MCF 10A (cell line): ENCODE measurements at regions of chr1 and their contacts with region 1.

Region 1: GRCh38 chr1:241531195-241532161 is 700 bp upstream of the KMO start:
- DNase-seq: peak; percentile 91
- H3K4me3 Mint-ChIP-seq: peak overlapping the region; percentile 74
- H3K27ac Mint-ChIP-seq: peak overlapping the region; percentile 80
- H3K4me1 Mint-ChIP-seq: peaks cover 21% of the 10 kb centered on the region
- H3K27me3 Mint-ChIP-seq: no peaks in the 10 kb centered on the region
- CTCF ChIP-seq: peak; percentile 77

Region 2: DNA sequence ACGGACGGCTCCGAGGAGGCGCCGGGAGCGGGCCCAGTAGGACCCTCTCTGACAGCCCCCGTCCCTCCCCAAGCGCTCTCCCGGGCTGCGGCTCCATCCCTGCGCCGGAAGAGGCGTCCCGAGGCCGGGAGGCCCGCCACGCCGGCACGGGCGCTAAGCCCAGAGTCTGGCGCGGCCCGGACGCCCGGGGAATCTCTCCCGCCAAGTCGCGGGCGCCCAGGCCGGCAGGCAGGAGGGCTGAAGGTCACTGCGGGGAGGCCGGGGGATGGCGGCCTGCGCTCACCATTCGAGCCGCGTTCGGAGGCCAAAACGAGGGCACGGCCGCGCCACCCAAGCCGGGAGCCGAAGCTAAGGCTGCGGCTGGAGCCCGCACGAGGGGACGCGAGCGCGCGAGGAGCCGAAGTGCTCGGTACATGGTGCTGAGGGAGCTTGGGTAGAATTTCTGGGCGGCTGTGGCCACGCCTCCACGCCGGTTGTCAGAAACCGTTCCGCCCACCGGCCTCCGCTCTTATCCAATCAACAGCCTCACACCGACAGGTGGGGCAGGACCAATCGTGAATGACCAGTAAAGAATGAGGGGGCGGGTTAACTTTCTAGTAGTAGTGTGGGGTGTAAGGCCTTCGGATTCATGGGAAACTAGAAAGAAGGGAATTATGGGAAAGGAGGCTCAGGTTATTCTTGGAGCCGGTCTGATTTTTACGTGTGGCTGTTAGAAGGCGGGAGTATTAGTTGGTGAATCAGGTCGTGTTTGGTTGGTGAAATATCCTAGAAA is 12.0 kb before region 1 on chr1 and contains the start of gene FH:
- CTCF ChIA-PET with region 1: interaction called, 4 read pairs
- POLR2A ChIA-PET with region 1: interaction called, 26 read pairs
- intact Hi-C with region 1: no loop called
- DNase-seq: peak; percentile 100
- H3K4me3 Mint-ChIP-seq: no peak within 1 kb of the TSS
- H3K27ac Mint-ChIP-seq: peak within 1 kb of the TSS; percentile 67
- H3K4me1 Mint-ChIP-seq: peaks cover 19% of the 10 kb centered on the region
- H3K27me3 Mint-ChIP-seq: peaks cover 13% of the 10 kb centered on the region
- CTCF ChIP-seq: no peak
- total RNA-seq, gene FH: 136 and 215 TPM in 2 replicates

Region 3: DNA sequence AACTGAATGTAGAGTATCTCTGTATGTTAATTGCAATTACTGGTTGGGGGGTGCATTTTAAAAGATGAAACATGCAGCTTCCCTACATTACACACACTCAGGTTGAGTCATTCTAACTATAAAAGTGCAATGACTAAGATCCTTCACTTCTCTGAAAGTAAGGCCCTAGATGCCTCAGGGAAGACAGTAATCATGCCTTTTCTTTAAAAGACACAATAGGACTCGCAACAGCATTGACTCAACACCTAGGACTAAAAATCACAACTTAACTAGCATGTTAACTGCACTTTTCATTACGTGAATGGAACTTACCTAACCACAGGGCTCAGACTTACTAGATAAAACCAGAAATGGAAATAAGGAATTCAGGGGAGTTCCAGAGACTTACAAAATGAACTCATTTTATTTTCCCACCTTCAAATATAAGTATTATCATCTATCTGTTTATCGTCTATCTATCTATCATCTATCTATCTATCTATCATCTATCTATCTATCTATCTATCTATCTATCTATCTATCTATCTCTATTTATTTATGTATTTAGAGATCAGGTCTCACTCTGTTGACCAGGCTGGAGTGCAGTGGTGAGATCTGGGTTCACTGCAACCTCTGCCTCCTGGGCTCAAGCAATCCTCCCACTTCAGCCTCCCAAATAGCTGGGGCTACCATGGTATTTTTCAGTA is 60.9 kb after region 1 on chr1:
- CTCF ChIA-PET with region 1: interaction called, 14 read pairs
- POLR2A ChIA-PET with region 1: interaction called, 6 read pairs
- intact Hi-C with region 1: loop called (anchors 1 kb)
- DNase-seq: peak; percentile 98
- H3K4me3 Mint-ChIP-seq: peak overlapping the region; percentile 7
- H3K27ac Mint-ChIP-seq: peak overlapping the region; percentile 76
- H3K4me1 Mint-ChIP-seq: peaks cover 39% of the 10 kb centered on the region
- H3K27me3 Mint-ChIP-seq: no peaks in the 10 kb centered on the region
- CTCF ChIP-seq: no peak

Region 4: DNA sequence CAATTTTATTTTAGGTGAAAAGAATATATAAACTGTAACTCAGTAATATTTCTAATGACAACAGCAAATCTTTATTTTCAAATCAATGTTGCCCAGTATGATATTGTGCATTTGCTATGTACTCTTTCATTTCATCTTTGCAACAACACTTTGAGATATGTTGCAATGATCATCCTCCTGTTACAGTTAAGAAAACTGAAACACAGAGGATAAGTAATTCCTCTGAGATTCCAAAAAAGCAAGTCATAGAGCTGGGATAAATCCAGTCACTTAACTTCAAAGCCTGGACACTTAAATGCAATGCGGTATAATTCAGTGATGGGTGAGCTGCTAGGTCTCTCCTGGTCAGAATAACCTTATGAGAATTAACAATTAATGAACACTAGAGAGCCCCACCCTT is 267.9 kb after region 1 on chr1:
- CTCF ChIA-PET with region 1: interaction called, 4 read pairs
- POLR2A ChIA-PET with region 1: no interaction called
- intact Hi-C with region 1: loop called (anchors 1 kb)
- DNase-seq: peak; percentile 51
- H3K4me3 Mint-ChIP-seq: no peak overlapping the region
- H3K27ac Mint-ChIP-seq: peak overlapping the region; percentile 8
- H3K4me1 Mint-ChIP-seq: peaks cover 23% of the 10 kb centered on the region
- H3K27me3 Mint-ChIP-seq: no peaks in the 10 kb centered on the region
- CTCF ChIP-seq: no peak

Region 5: GRCh38 chr1:241847796-241848685 is 316.6 kb after region 1 on chr1 and contains the start of gene EXO1:
- CTCF ChIA-PET with region 1: interaction called, 8 read pairs
- POLR2A ChIA-PET with region 1: interaction called, 5 read pairs
- intact Hi-C with region 1: loop called (anchors 1 kb)
- DNase-seq: peak; percentile 98
- H3K4me3 Mint-ChIP-seq: peak within 1 kb of the TSS; percentile 95
- H3K27ac Mint-ChIP-seq: peak within 1 kb of the TSS; percentile 81
- H3K4me1 Mint-ChIP-seq: peaks cover 18% of the 10 kb centered on the region
- H3K27me3 Mint-ChIP-seq: no peaks in the 10 kb centered on the region
- CTCF ChIP-seq: peak; percentile 38
- total RNA-seq, gene EXO1: 7.3 and 17.5 TPM in 2 replicates

Region 6: GRCh38 chr1:241998412-241998921 is 467.0 kb after region 1 on chr1:
- CTCF ChIA-PET with region 1: interaction called, 5 read pairs
- POLR2A ChIA-PET with region 1: interaction called, 4 read pairs
- intact Hi-C with region 1: loop called (anchors 5 kb)
- DNase-seq: peak; percentile 93
- H3K4me3 Mint-ChIP-seq: peak overlapping the region; percentile 62
- H3K27ac Mint-ChIP-seq: no peak overlapping the region
- H3K4me1 Mint-ChIP-seq: peaks cover 7% of the 10 kb centered on the region
- H3K27me3 Mint-ChIP-seq: no peaks in the 10 kb centered on the region
- CTCF ChIP-seq: peak; percentile 89